Mammary epithelial cell (primary cell): ENCODE measurements at regions of chr22 and their contacts with region 1.

Region 1: DNA sequence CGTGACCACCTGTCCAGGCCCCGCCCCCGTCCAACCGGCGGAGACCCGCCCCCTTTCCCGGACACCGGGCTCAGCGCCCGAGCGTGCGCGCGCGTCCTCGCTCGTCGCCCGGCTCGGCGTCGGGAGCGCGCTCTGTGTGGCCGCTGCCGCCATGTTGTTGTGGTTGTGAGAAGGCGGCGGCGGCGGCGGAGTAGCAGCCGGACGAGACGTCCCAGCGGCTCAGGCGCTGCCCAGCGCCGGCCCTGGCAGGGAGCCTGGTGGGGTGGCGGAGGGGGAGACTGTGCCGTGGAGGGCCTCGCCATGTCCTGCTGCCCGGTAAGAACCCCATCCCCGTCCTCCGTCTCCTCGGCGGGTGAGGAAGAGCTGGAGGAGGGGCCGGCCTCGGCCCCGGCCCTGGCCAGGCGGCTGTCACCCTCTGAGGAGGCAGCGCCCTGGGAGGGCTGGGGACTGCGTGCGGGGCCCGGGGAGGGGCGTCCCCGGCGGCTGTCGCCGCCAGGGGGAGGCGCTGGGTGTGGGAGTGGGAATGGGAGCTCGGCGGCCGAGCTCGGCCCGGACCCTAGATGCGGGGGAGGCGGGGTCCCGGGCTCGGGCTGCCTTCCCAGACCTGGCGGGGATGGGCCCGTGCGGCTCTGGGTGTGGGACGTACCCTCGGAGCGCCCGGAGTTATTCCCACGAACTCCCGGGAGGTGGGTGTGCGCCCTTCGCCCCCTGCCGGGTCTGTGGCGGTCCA is at the start of gene MTMR3:
- DNase-seq: peak; percentile 91
- H3K4me3 ChIP-seq: peak within 1 kb of the TSS; percentile 74 to 99 (median 87)
- H3K27ac ChIP-seq: peak within 1 kb of the TSS; percentile 71
- H3K4me1 ChIP-seq: no peaks in the 10 kb centered on the region
- H3K27me3 ChIP-seq: no peaks in the 10 kb centered on the region
- CTCF ChIP-seq: peak in 1 of 2 donors; percentile 43
- total RNA-seq, gene MTMR3: 34.1 to 67.2 TPM

Region 2: DNA sequence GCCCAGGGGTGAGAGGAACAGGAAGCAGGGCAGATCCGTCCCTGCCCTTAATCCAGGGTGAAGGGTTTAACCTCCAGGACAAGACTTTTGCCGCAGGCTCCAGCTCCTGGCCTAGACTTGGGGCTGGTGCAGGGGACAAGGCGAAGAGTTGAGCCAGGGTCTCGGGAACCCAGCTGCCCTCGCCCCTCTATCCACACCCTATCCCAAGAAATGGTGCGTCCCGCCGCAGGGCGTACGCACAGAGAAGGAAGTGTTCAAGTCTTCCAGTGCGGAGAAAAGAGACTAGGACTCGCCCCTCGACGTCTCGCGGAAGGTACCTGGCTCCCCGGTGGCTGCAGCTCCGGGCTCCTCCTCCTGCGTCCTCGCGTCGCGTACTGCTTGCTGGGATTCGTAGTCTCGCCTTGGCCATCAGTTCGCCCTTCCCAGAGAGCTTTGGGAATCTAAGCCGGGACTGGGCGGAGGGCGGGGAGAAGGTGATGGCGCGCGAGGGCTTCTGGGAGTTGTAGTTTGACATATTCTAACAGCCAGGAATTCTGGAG is 116.5 kb before region 1 on chr22 and contains the start of gene ZMAT5:
- CTCF ChIA-PET with region 1: no interaction called
- dilution Hi-C with region 1: no loop called
- in situ Hi-C with region 1: no loop called
- intact Hi-C with region 1: loop called (anchors 10 kb)
- DNase-seq: peak; percentile 97
- H3K4me3 ChIP-seq: peak within 1 kb of the TSS; percentile 72 to 97 (median 80)
- H3K27ac ChIP-seq: peak within 1 kb of the TSS; percentile 82
- H3K4me1 ChIP-seq: peaks cover 12% of the 10 kb centered on the region
- H3K27me3 ChIP-seq: no peaks in the 10 kb centered on the region
- CTCF ChIP-seq: no peak
- total RNA-seq, gene ZMAT5: 15.3 to 15.5 TPM

Region 3: GRCh38 chr22:29837780-29838598 is 45.2 kb before region 1 on chr22 and contains the start of gene ASCC2:
- CTCF ChIA-PET with region 1: no interaction called
- dilution Hi-C with region 1: no loop called
- in situ Hi-C with region 1: no loop called
- intact Hi-C with region 1: loop called (anchors 1 kb)
- DNase-seq: peak; percentile 98
- H3K4me3 ChIP-seq: peak within 1 kb of the TSS; percentile 86 to 96 (median 91)
- H3K27ac ChIP-seq: peak within 1 kb of the TSS; percentile 67
- H3K4me1 ChIP-seq: peaks cover 24% of the 10 kb centered on the region
- H3K27me3 ChIP-seq: no peaks in the 10 kb centered on the region
- CTCF ChIP-seq: no peak
- total RNA-seq, gene ASCC2: 41.3 to 72.2 TPM

Region 4: GRCh38 chr22:30234786-30235470 is 351.7 kb after region 1 on chr22:
- CTCF ChIA-PET with region 1: no interaction called
- dilution Hi-C with region 1: no loop called
- in situ Hi-C with region 1: no loop called
- intact Hi-C with region 1: no loop called
- DNase-seq: no peak
- H3K4me3 ChIP-seq: no peak overlapping the region
- H3K27ac ChIP-seq: no peak overlapping the region
- H3K4me1 ChIP-seq: peaks cover 23% of the 10 kb centered on the region
- H3K27me3 ChIP-seq: no peaks in the 10 kb centered on the region
- CTCF ChIP-seq: no peak